A673 (cell line): ENCODE measurements at regions of chr4 and their contacts with region 1.

Region 1: DNA sequence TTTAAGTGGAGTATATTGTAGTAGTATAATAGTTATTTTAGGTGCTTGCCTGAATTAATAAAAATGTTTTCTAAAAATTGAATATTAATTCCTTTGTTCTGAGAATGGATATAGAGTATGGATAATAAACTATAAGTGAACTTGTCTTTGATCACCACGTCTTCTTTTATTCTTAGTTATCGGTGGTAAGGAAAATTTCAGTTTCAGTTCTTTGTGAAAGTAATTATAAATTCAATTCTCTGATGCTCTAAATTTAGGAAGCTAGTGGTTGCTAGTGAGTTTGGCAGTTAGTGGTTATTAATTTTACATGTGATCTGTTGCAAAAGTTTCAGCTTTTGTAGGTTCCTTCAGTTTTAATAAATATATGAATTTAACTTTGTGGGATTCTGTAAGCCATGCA is 30.8 kb downstream of the MRPL1 start:
- DNase-seq: no peak
- H3K4me3 ChIP-seq: no peak overlapping the region
- H3K27ac ChIP-seq: no peak overlapping the region
- H3K4me1 ChIP-seq: no peaks in the 10 kb centered on the region
- H3K27me3 ChIP-seq: no peaks in the 10 kb centered on the region
- CTCF ChIP-seq: no peak

Region 2: GRCh38 chr4:78265006-78265405 is 371.6 kb after region 1 on chr4:
- CTCF ChIA-PET with region 1: no interaction called
- POLR2A ChIA-PET with region 1: no interaction called
- intact Hi-C with region 1: no loop called
- DNase-seq: no peak
- H3K4me3 ChIP-seq: no peak overlapping the region
- H3K27ac ChIP-seq: no peak overlapping the region
- H3K4me1 ChIP-seq: no peaks in the 10 kb centered on the region
- H3K27me3 ChIP-seq: no peaks in the 10 kb centered on the region
- CTCF ChIP-seq: no peak

Region 3: DNA sequence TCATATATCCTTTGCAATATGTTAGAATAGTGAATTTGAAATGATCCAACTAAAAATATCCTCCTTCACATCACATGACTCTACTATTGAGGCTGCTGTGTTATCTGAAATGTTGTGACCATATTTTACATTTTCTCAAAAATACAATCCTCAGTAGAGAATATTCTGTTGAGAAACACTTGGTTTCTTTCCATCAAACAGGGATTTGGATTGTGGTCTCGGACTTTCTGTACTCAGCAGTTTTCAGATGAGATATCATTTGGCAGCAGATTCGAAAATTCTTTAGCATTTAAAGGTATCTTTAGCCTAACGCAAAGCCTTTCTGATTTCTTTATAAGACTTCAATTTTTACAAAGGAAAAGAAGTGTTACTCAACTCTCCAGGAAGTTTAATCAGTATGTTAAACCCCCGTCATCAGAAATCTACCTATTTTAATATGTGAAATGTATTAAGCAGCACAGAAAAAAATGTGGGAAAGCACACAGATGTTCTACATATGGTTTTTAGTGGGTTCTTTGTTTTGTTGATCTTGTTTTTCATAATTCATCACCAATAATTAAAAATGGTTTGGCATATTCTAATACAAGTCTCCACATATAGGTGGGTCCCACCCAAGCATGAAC is 602.7 kb after region 1 on chr4:
- CTCF ChIA-PET with region 1: no interaction called
- POLR2A ChIA-PET with region 1: no interaction called
- intact Hi-C with region 1: no loop called
- DNase-seq: no peak
- H3K4me3 ChIP-seq: no peak overlapping the region
- H3K27ac ChIP-seq: no peak overlapping the region
- H3K4me1 ChIP-seq: peaks cover 5% of the 10 kb centered on the region
- H3K27me3 ChIP-seq: no peaks in the 10 kb centered on the region
- CTCF ChIP-seq: no peak

Region 4: DNA sequence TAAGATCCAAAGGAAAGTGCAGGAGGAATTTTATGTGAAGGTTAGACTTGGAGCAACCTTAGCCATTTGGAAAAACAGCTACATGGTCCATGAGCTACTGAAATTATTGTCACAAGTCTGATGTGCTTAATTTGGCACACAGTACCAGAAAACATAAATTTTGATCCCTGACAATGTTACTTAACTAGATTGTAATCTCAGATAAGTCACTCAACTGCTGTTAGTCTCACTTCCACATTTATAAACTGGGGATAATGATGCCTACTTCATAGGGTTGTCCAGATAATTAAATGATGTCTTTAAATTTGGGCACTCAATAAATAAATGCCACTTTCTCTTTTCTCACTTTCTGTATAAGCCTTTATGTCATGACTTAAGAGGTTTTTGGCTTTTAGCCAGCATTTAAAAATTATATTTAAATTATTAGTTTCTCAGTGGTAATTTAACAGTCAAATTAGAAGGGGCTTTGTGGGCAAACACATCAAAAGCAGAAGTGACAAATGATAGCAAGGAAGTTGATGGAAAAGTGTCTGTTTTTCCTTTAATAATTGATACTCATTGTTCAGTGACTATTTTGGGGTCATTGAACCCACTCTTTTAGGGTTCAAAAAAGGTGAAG is 987.5 kb after region 1 on chr4:
- CTCF ChIA-PET with region 1: no interaction called
- POLR2A ChIA-PET with region 1: interaction called, 25 read pairs
- intact Hi-C with region 1: no loop called
- DNase-seq: no peak
- H3K4me3 ChIP-seq: no peak overlapping the region
- H3K27ac ChIP-seq: no peak overlapping the region
- H3K4me1 ChIP-seq: no peaks in the 10 kb centered on the region
- H3K27me3 ChIP-seq: no peaks in the 10 kb centered on the region
- CTCF ChIP-seq: no peak